ENCODE measurements at regions of chrX and their contacts with region 1.

Region 1: DNA sequence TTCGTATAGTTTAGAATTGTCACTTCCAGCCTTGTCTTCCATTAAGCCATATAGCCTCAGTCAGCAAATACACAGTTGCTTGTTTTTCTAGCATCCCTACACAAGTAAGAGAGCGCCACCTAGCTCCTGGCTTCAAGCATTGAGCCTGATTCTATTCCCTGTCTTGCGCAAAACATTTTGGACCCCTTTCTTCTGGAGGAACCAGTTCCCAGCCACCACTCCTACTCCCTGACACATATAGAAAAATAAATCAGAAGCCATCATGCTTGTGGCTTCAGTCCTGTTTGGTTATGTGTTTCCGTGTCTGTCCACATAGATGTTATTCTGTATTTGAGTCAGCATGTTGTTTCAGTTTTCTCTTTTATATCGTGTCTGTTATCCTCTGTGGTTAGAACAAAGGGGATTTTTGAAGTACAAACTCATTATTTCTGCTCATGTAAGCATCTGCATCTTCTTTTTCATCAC is 59.9 kb downstream of the GK start:
- DNase-seq: peak; percentile 10
- H3K4me3 ChIP-seq: no peak overlapping the region
- H3K27ac ChIP-seq: no peak overlapping the region
- H3K27me3 ChIP-seq: no peaks in the 10 kb centered on the region
- CTCF ChIP-seq: peak; percentile 71

Region 2: GRCh38 chrX:30570505-30570904 is 142.6 kb before region 1 on chrX:
- CTCF ChIA-PET with region 1: interaction called, 25 read pairs
- POLR2A ChIA-PET with region 1: no interaction called
- DNase-seq: no peak
- H3K4me3 ChIP-seq: no peak overlapping the region
- H3K27ac ChIP-seq: no peak overlapping the region
- H3K27me3 ChIP-seq: no peaks in the 10 kb centered on the region
- CTCF ChIP-seq: peak; percentile 43

Region 3: DNA sequence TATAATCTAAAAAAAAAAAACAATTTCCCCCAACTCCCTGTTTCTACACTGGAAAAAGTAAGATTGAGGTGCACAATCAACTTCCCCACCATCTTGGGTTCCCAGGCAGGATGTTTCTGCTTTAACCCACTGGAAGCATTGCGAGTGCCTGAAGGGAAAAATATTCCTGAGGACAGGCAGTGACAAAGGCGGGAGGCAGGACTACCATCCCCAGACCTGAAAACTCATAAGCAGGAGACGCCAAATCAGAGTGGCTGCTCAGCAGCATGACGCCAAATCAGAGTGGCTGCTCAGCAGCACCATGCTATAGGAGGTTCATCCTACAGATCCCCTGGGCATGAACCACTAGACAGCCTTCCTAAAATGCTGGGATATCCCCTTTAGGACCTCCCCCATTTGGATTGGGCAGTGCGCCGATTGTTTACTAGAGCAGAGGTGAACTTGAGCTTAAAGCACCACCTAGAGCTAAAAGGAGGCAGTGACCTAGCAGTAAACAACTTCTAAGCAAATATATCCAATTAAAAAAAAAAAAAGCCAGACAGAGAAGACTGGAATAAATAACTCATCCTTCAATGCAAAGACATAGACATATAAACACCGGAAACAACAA is 94.8 kb before region 1 on chrX:
- CTCF ChIA-PET with region 1: interaction called, 10 read pairs
- POLR2A ChIA-PET with region 1: no interaction called
- DNase-seq: no peak
- H3K4me3 ChIP-seq: no peak overlapping the region
- H3K27ac ChIP-seq: no peak overlapping the region
- H3K27me3 ChIP-seq: no peaks in the 10 kb centered on the region
- CTCF ChIP-seq: no peak

Region 4: GRCh38 chrX:30635630-30636029 is 77.5 kb before region 1 on chrX:
- CTCF ChIA-PET with region 1: interaction called, 16 read pairs
- POLR2A ChIA-PET with region 1: no interaction called
- DNase-seq: no peak
- H3K4me3 ChIP-seq: no peak overlapping the region
- H3K27ac ChIP-seq: no peak overlapping the region
- H3K27me3 ChIP-seq: no peaks in the 10 kb centered on the region
- CTCF ChIP-seq: peak; percentile 46

Region 5: GRCh38 chrX:30781711-30782444 is 68.8 kb after region 1 on chrX:
- CTCF ChIA-PET with region 1: no interaction called
- POLR2A ChIA-PET with region 1: no interaction called
- DNase-seq: no peak
- H3K4me3 ChIP-seq: no peak overlapping the region
- H3K27ac ChIP-seq: no peak overlapping the region
- H3K27me3 ChIP-seq: no peaks in the 10 kb centered on the region
- CTCF ChIP-seq: no peak

Measured in AG04450 (cell line).